ENCODE measurements at regions of chr7 and their contacts with region 1.

Region 1: DNA sequence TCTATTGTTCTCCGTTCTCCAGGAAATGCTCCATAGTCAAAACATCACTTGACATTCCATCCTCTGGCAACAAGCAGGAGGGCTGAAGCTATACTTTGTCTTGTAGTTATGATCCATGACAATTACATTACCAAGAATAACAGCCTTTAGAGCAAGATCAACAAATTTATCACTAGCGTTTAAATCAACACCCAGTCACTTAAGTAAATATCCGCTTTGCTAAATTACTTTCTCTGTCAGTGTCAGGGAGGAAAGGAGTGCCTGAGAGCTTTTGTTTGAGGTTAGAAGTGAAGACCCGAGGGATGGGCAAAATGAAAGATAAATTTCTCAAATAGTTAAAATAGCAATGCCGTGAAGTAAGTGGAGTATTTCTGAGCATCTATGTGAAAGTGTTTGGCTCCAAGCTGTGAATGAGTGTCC is 236.1 kb upstream of the BMPER start:
- DNase-seq: peak; percentile 93
- H3K4me3 ChIP-seq: peak overlapping the region in 1 of 3 experiments; percentile 31
- H3K27ac ChIP-seq: peak overlapping the region; percentile 85
- H3K4me1 ChIP-seq: peaks cover 30% of the 10 kb centered on the region
- H3K27me3 ChIP-seq: no peaks in the 10 kb centered on the region
- CTCF ChIP-seq: no peak
- POLR2A ChIP-seq: peak; percentile 41

Region 2: DNA sequence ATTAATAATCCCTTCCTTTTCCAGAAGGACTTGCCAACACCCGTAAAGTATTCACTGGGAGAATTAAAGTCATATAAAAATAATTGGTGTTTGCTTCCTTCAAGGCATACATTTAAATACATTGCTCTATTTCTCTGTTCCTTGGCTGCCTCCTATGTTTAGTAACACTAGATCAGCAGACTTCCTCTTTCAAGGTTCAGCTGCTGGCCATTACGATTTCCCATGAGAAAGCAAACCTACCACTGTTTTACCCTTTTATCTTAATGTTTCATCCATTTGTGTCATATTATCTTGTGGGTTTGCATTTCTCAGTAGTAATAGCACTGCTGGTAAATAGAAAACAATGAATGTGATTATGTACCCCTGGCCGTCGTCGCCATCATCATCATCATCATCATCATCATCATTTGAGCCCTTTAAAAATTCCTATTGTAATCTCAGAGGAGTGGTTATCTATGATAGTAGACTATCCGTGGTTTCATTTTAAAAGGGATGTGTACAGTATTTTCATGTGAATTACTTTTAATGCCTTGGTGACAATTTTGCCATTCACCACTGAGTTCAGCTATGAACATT is 77.7 kb before region 1 on chr7:
- CTCF ChIA-PET with region 1: no interaction called
- POLR2A ChIA-PET with region 1: no interaction called
- dilution Hi-C with region 1: no loop called
- intact Hi-C with region 1: loop called (anchors 1 kb)
- DNase-seq: peak; percentile 69
- H3K4me3 ChIP-seq: no peak overlapping the region
- H3K27ac ChIP-seq: peak overlapping the region; percentile 27
- H3K4me1 ChIP-seq: peaks cover 17% of the 10 kb centered on the region
- H3K27me3 ChIP-seq: no peaks in the 10 kb centered on the region
- CTCF ChIP-seq: no peak
- POLR2A ChIP-seq: no peak

Region 3: DNA sequence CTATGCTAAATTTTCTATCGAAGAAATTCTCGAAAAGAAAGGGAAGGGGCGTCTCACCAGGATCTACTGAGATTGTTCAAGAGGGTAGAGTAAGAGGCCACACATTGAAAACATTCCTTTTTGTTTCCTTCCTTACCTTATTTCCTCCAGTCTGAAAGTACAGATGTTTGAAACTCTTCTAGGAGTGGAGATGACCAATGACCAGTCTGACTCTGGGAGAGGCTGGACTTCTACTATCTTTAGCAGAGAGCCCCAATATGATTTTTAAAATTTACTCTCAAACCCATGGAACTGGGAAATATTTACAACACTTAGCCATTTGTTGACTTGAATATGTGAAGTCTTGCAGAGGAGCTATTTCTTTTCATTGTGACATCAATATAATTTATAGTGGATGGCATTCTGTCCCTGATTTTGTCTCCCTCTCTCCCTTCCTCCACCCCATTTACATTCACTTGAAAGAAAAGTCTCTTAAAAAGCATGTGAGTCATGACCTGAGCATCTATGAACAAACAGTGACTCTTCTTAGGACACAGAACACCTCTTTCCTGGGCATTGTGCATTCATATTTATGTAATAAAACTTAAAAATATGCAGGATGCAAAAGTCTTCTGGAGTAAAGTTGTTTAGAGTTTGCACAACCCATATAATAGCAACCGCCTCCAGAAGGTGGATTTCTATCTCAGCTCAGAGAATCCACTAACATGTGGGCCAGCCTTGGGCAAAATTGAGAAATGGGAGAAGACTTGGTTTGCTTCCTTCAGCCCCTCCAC is 204.9 kb after region 1 on chr7:
- CTCF ChIA-PET with region 1: no interaction called
- POLR2A ChIA-PET with region 1: no interaction called
- dilution Hi-C with region 1: no loop called
- intact Hi-C with region 1: no loop called
- DNase-seq: no peak
- H3K4me3 ChIP-seq: no peak overlapping the region
- H3K27ac ChIP-seq: no peak overlapping the region
- H3K4me1 ChIP-seq: no peaks in the 10 kb centered on the region
- H3K27me3 ChIP-seq: no peaks in the 10 kb centered on the region
- CTCF ChIP-seq: no peak
- POLR2A ChIP-seq: no peak